HepG2 (cell line): ENCODE measurements at regions of chr3 and their contacts with region 1.

Region 1: GRCh38 chr3:36729204-36730056 is 34.9 kb downstream of the DCLK3 start:
- DNase-seq: peak; percentile 34
- ATAC-seq: peak; percentile 75
- H3K4me3 ChIP-seq: no peak overlapping the region
- H3K27ac ChIP-seq: no peak overlapping the region
- H3K4me1 ChIP-seq: no peaks in the 10 kb centered on the region
- H3K27me3 ChIP-seq: no peaks in the 10 kb centered on the region
- CTCF ChIP-seq: peak; percentile 70
- EP300 ChIP-seq: no peak
- POLR2A ChIP-seq: no peak
- RAD21 ChIP-seq: peak; percentile 41; the same call in 1 of the 2 replicates

Region 2: GRCh38 chr3:36843065-36844051 is 113.9 kb after region 1 on chr3:
- CTCF ChIA-PET with region 1: interaction called, 6 read pairs
- POLR2A ChIA-PET with region 1: no interaction called
- in situ Hi-C with region 1: loop called (anchors 10 kb)
- intact Hi-C with region 1: no loop called
- DNase-seq: peak; percentile 24
- ATAC-seq: peak; percentile 78
- H3K4me3 ChIP-seq: no peak overlapping the region
- H3K27ac ChIP-seq: no peak overlapping the region
- H3K4me1 ChIP-seq: peaks cover 10% of the 10 kb centered on the region
- H3K27me3 ChIP-seq: no peaks in the 10 kb centered on the region
- CTCF ChIP-seq: peak; percentile 53
- EP300 ChIP-seq: no peak
- POLR2A ChIP-seq: no peak
- RAD21 ChIP-seq: no peak

Region 3: DNA sequence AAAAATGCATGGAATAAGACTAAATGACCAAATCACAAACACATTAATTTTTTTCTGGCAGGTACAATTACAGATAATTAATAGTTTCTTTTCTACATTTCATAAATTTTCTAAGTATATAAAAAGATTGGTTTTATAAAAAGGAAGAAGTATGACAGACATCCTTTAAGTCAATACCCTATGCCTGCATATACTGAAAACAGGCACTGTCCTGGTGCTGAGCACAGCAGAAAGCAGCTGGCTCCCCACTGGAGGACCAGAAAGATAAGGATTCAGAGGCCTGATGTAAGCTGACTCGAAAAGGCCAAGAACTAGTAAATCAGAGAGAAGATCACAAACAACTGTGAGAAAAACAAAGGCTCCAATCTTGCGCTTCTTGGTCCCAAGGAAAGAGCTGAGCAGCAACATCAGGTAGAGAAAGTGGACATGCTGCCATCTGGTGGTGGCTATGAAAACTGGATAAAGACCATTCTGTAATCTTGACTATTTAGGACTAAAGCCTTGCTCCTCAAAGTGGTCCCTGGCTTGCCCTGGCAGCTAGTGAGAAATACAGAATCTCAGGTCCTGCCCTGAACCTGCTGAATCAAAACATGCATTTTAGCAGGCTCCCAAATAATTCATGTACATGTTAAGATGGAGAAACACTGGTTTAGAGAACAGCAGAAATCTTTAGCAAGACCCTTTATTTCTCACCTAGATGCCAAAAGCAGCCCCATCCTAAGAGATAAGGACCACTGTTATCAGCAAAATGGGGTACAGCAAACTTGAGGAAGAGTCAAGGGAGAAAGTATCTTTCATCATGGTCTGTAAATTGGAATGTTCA is 139.4 kb after region 1 on chr3:
- CTCF ChIA-PET with region 1: interaction called, 21 read pairs
- POLR2A ChIA-PET with region 1: no interaction called
- in situ Hi-C with region 1: loop called (anchors 5 kb)
- intact Hi-C with region 1: loop called (anchors 1 kb)
- DNase-seq: peak; percentile 17
- ATAC-seq: peak; percentile 90
- H3K4me3 ChIP-seq: no peak overlapping the region
- H3K27ac ChIP-seq: no peak overlapping the region
- H3K4me1 ChIP-seq: no peaks in the 10 kb centered on the region
- H3K27me3 ChIP-seq: no peaks in the 10 kb centered on the region; a peak in 1 of 5 replicates
- CTCF ChIP-seq: peak; percentile 82
- EP300 ChIP-seq: no peak
- POLR2A ChIP-seq: no peak
- RAD21 ChIP-seq: peak; percentile 43; the same call in 1 of the 2 replicates

Region 4: GRCh38 chr3:36957862-36958686 is 228.6 kb after region 1 on chr3:
- CTCF ChIA-PET with region 1: interaction called, 8 read pairs
- POLR2A ChIA-PET with region 1: no interaction called
- in situ Hi-C with region 1: loop called (anchors 25 kb)
- intact Hi-C with region 1: loop called (anchors 1 kb)
- DNase-seq: no peak
- ATAC-seq: no peak
- H3K4me3 ChIP-seq: no peak overlapping the region
- H3K27ac ChIP-seq: no peak overlapping the region
- H3K4me1 ChIP-seq: peaks cover 10% of the 10 kb centered on the region; the same call in 1 of the 2 replicates
- H3K27me3 ChIP-seq: no peaks in the 10 kb centered on the region; a peak in 1 of 5 replicates
- CTCF ChIP-seq: no peak
- EP300 ChIP-seq: no peak
- POLR2A ChIP-seq: no peak
- RAD21 ChIP-seq: no peak

Region 5: GRCh38 chr3:36969540-36970432 is 240.4 kb after region 1 on chr3:
- CTCF ChIA-PET with region 1: no interaction called
- POLR2A ChIA-PET with region 1: no interaction called
- in situ Hi-C with region 1: loop called (anchors 25 kb)
- intact Hi-C with region 1: no loop called
- DNase-seq: peak; percentile 73
- ATAC-seq: peak; percentile 93
- H3K4me3 ChIP-seq: no peak overlapping the region
- H3K27ac ChIP-seq: no peak overlapping the region
- H3K4me1 ChIP-seq: peaks cover 37% of the 10 kb centered on the region
- H3K27me3 ChIP-seq: no peaks in the 10 kb centered on the region
- CTCF ChIP-seq: no peak
- EP300 ChIP-seq: no peak
- POLR2A ChIP-seq: no peak
- RAD21 ChIP-seq: no peak

Region 6: GRCh38 chr3:37221407-37221806 is 492.0 kb after region 1 on chr3:
- CTCF ChIA-PET with region 1: no interaction called
- POLR2A ChIA-PET with region 1: no interaction called
- in situ Hi-C with region 1: loop called (anchors 25 kb)
- intact Hi-C with region 1: no loop called
- DNase-seq: peak; percentile 89
- ATAC-seq: peak; percentile 43
- H3K4me3 ChIP-seq: no peak overlapping the region
- H3K27ac ChIP-seq: no peak overlapping the region
- H3K4me1 ChIP-seq: peaks cover 62% of the 10 kb centered on the region
- H3K27me3 ChIP-seq: no peaks in the 10 kb centered on the region
- CTCF ChIP-seq: no peak
- EP300 ChIP-seq: peak in 1 of 2 experiments; percentile 30; a peak in 1 of 4 replicates
- POLR2A ChIP-seq: 0 out of 4 replicates have a peak, but pooled peaks of 1 of the 2 experiments have one; percentile 20
- RAD21 ChIP-seq: no peak